ENCODE measurements at regions of chr3 and their contacts with region 1.

Region 1: GRCh38 chr3:123028233-123028828 is 768 bp upstream of the SEMA5B start:
- DNase-seq: no peak
- ATAC-seq: peak; percentile 59

Region 2: DNA sequence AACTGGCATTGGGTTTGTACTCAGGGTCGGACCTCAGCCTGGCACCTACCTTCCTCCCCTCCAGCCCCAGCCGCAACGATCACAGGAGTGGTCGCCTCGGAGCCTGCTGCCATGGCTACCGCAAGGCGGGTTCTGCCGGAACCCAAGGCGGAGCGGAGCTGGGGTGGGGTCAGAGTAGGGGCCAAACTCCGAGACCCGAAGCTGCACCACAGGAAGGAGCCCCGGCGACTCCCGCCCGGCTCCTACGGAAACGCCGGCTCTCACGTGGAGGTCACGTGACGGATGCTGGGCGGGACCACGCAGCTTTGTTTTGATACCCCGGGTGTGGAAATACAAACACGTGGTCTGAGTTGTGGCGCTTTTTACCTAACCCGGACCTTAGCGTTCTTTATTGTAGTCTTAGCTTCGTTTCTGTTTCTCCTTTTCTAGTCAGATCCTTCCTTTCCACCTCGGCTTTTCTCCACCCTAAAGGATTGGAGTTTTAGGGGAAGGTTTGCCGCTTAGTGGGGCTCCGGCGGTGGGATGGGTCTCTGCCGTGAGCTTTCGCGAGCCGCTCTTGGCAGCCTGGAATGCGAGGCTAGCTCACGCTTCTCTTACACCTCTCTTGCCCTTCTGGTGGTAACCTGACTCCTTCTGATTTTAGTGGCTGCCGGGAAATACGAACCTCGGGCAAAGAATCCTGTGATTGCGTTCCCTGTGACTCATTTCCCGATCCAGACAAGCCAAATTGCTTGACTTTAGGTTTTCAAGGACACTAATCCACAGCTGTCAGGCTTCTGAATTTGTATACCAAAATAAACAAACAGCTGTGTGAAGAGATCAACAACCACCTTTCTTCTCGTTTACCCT is 234.5 kb before region 1 on chr3 and contains the start of gene HSPBAP1:
- intact Hi-C with region 1: no loop called
- DNase-seq: peak; percentile 96
- ATAC-seq: peak; percentile 79
- total RNA-seq, gene HSPBAP1: 5.3 TPM

Region 3: DNA sequence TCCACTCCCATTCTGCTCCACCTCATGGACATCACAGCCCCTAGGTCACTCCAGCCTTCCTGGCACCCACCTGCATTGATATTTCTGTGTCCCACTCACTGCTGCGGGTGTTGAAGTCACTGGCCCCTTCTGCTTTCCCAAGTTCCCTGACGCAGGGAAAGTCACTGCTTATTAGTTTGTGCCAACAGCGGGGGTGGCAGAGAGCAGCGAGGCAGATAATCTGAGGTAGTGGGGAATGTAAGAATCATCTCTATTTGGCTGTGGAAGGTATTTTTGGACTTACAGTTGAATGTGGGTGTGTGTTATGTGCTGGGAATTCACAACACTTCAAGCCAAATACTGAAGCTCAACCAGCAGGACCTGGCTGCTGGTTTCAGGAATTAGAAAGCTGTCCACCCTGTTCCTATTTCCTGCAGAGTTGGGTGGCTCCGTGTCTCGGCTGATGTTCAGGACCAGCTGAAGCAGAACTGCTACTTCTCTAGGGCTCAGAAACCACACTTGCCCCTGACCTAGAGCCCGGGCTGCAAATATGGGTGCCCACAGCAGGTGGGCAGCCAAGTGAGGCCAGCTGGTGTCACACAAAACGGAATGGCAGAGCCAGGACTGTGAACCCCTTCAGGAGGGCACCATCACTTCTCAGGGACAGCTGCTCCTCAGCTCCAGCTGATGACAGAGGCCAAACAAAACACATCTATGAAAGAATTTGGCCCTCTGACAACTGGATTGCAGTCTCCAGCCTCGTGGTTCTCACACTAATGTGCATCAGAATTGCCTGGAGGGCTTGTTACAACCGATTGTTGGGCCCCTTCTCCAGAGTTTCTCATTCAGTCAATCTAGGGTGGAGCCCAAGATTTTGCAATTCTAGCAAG is 58.5 kb before region 1 on chr3:
- intact Hi-C with region 1: loop called (anchors 10 kb)
- DNase-seq: no peak
- ATAC-seq: peak; percentile 62

Measured in left ventricle myocardium superior (tissue), 1 donor.